ENCODE measurements at regions of chr16 and their contacts with region 1.

Region 1: GRCh38 chr16:81385031-81385756 is 59.4 kb upstream of the CMIP start:
- DNase-seq: no peak
- ATAC-seq: no peak; the same call in 1 of the 2 replicates
- H3K4me3 ChIP-seq: no peak overlapping the region
- H3K27ac ChIP-seq: peak overlapping the region; percentile 11; the same call in 1 of the 2 replicates
- H3K4me1 ChIP-seq: no peaks in the 10 kb centered on the region
- H3K27me3 ChIP-seq: no peaks in the 10 kb centered on the region
- CTCF ChIP-seq: no peak

Region 2: DNA sequence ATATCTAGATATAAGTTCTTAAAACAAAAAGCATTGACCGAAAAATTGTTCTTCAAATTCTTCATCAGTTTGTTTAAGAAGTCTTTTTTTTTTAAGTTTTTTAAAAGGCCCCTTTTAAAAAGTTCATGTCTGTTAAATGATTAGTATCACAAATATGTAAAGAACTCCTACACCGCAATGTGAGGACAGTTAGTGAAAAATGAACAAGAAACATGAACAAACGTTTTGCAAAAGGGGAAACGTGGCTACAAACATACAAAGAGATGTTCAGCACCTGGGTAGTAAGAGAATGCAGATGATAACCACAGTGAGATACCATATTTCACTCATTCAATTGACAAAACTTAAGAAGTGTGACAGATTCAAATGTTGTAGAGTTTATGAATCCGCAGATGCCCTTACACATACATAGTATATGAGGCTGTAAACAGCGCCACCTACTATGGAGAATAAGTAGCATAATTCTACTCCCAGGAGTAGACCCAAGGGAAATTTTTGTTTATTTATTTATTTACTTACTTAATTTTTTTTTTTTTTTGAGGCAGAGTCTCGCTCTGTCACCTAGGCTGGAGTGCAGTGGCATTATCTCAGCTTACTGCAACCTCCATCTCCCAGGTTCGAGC is 35.1 kb before region 1 on chr16:
- CTCF ChIA-PET with region 1: no interaction called
- POLR2A ChIA-PET with region 1: no interaction called
- intact Hi-C with region 1: no loop called
- DNase-seq: peak; percentile 57
- ATAC-seq: peak; percentile 84
- H3K4me3 ChIP-seq: no peak overlapping the region
- H3K27ac ChIP-seq: no peak overlapping the region
- H3K4me1 ChIP-seq: no peaks in the 10 kb centered on the region
- H3K27me3 ChIP-seq: no peaks in the 10 kb centered on the region
- CTCF ChIP-seq: peak; percentile 62

Region 3: GRCh38 chr16:81429045-81429521 is 43.9 kb after region 1 on chr16:
- CTCF ChIA-PET with region 1: no interaction called
- POLR2A ChIA-PET with region 1: interaction called, 10 read pairs
- intact Hi-C with region 1: no loop called
- DNase-seq: peak; percentile 60
- ATAC-seq: peak; percentile 68
- H3K4me3 ChIP-seq: no peak overlapping the region
- H3K27ac ChIP-seq: no peak overlapping the region
- H3K4me1 ChIP-seq: peaks cover 13% of the 10 kb centered on the region; the same call in 1 of the 2 replicates
- H3K27me3 ChIP-seq: no peaks in the 10 kb centered on the region
- CTCF ChIP-seq: peak; percentile 57

Measured in PC-3 (cell line).